Posterior vena cava (tissue), 2 donors: ENCODE measurements at regions of chr22 and their contacts with region 1.

Region 1: DNA sequence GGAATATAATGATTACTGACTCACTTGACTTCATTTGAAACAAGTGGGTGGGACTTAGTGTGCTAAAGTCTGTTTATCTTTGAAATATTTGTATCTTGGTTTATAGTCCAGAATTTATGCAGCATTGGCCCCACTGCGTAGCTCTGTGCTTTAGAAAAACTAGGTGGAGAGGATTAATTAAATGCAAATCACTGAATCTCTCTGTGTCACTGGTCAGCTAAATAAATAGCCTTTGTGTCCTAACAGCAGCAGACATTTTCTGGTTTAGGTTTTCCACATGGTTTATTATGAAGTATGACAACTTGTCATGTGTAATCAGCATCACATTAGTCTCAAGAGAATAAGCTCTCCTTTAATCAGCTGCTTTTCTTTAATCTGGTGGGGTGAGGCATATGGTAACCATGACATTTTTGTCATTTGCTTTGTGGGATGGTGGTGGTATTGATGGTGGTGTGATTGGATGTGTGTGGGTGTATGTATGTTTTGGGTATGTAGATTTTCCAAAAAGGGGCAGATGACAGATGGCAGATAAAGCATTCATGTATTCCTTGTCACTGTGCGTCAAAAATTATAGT is 33.9 kb downstream of the BCL2L13 start:
- DNase-seq: no peak

Region 2: DNA sequence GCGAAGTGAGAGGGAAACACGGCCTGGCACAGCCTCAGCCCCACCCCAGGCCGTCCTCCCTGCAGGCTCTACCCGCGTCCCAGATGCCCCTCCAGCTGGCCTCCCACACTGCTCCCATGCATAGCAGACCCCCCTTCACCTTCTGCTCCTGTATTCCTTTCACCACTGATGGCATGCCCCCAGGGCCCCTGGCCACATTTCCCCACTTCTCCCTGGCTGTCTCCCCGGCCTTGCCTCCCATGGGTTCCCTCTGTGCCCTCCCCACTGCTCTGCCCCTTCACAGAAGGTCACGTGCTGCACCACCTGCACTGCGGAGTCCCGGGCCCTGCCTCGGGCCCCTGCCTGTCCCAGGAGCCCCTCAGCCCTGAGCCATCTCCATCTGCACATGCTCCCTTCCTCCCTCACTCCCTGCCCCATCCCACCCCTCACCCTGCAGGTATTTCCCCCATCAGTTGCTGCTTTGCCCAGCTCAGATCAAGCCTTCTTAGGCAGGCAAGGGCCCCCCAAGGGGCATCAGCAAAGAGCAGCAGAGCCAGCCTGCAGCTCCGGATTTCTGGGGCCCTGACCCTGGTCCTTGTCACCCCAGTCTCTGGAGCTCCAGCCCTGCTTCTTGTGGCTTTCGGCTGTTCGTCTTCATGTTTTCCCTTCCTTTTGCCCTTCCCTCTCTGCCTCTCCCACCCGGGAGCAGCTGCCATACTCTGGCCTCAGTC is 710.9 kb before region 1 on chr22:
- intact Hi-C with region 1: no loop called
- DNase-seq: no peak

Region 3: DNA sequence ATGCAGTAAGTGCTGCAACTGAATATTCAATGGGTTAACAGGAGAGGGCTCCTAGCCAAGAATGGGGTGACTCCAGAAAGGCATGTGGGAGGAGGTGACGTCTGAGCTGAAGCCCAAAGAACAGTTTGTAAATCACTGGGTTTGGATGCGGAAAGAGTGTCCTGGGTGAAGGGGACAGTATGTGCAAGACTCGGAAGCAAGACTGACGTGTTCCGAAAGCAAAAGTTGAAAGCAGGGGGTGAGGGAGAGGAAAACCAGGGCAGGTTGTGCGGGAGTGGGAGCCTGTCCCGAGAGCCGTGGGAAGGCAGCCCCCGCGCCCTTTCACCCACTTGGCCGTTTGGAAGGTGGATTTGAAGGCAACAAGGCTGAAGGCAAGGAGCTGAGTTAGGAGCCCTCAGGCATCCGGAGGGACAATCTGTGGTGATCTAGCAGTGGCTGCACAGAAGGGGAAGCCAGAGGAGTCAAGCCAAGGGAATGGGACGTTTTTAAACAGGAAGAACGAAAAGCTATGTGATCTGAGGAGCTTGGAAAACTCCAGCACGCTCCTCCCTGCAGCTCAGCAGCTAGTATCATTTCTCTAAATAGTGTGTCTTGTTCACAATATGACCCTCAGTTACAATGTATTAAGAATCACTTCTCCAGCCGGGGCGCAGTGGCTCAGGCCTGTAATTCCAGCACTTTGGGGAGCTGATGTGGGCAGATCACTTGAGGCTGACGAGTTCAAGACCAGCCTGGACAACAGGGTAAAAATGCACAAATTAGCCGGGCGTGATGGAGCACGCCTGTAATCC is 101.5 kb before region 1 on chr22:
- intact Hi-C with region 1: no loop called
- DNase-seq: peak; percentile 88

Region 4: GRCh38 chr22:17655289-17655688 is 17.2 kb before region 1 on chr22:
- intact Hi-C with region 1: loop called in 1 of 2 experiments (anchors 1 kb)
- DNase-seq: no peak

Region 5: GRCh38 chr22:17830043-17830961 is 157.8 kb after region 1 on chr22:
- intact Hi-C with region 1: no loop called
- DNase-seq: peak; percentile 94